HEK293 (cell line): ENCODE measurements at regions of chr12 and their contacts with region 1.

Region 1: DNA sequence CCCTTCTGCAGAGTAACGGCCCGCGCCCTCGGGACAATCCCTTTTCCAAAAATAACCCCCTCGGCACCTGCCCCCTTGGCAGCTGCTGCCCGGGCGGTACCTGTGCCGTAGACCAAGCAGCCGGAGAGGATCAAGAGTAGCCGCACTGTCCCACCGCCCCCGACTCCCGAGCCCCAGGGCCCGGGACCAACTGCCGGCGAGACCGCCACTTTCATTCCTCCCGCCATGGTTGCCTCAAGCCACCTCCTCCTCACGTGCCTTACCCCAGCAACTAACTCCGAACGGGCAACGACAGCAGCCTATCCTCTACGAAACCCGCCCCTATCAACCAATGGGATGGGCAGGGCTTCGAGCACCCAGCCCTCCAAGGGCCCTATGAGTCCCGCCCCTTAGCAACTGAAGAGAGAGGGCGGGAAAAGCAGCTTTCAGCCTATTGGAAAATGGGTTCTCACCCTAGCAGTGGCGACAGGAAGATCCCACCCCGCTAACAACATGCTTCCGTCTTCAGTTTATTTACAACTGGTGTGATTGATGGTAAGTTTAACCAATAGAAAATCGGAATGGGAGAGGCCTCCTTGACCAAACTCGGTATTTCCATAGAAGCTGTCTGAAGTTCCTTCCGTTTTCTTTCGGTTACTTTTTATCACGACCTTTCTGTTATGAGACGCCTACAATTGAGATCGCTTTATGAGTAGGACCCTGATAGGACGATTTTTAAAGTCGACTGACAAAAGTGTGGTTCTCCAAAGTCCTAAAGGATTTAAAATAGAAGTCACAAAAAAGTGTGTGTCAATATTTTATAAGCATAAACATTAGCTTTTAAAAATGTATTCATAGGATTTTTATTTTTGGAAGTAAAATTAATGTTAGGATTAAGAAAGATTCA is at the start of gene NEMP1:
- H3K4me3 ChIP-seq: peak within 1 kb of the TSS; percentile 75
- H3K27ac ChIP-seq: peak within 1 kb of the TSS; percentile 96
- H3K4me1 ChIP-seq: peaks cover 3% of the 10 kb centered on the region
- CTCF ChIP-seq: no peak

Region 2: DNA sequence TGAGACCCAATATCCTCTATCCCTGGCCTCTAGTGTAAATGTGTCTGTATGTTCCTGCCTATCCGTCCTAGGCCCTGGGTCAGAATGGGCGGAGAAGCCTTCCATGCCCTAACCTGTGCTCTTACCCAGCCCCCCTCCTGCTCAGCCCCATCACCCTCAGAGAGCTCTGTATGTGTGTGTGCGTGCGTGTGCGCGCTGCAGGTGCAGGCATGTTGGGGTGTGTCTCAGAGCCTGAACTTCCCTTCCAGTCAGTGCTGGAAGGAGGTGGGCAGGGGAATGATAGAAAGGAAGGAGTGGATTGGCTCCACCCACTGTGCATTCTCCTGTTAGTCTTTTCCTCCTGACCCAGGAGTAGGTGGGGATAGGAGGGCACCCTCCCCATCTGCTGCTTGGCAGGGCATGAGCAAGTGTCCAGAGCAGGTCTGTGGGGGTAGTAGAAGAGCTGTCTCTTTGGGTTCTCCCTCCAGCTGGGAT is 17.4 kb after region 1 on chr12:
- CTCF ChIA-PET with region 1: interaction called, 48 read pairs
- POLR2A ChIA-PET with region 1: interaction called, 11 read pairs
- H3K4me3 ChIP-seq: no peak overlapping the region
- H3K27ac ChIP-seq: no peak overlapping the region
- H3K4me1 ChIP-seq: no peaks in the 10 kb centered on the region
- CTCF ChIP-seq: no peak

Region 3: DNA sequence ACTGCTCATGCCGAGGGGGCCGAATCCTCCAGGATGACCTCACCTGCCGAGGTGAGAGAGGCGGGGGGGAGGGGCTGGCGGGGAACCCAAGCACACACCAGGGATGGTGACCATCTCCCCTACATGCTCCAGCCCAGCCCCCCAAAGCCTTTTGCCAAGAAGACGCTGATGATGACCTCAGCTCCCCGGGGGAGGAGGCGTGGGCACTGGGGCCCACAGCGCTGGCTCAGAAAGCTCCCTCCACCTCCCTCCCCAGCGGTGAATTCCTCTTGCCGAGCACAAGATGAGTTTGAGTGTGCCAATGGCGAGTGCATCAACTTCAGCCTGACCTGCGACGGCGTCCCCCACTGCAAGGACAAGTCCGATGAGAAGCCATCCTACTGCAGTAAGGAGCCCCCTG is 114.2 kb after region 1 on chr12:
- CTCF ChIA-PET with region 1: no interaction called
- POLR2A ChIA-PET with region 1: no interaction called
- H3K4me3 ChIP-seq: no peak overlapping the region
- H3K27ac ChIP-seq: no peak overlapping the region
- H3K4me1 ChIP-seq: no peaks in the 10 kb centered on the region
- CTCF ChIP-seq: no peak